CD4-positive, alpha-beta T cell (primary cell): ENCODE measurements at regions of chr14 and their contacts with region 1.

Region 1: GRCh38 chr14:64338616-64339316 is 44.6 kb upstream of the ESR2 start:
- DNase-seq: peak; percentile 58 to 95 (median 80)
- ATAC-seq: peak; percentile 79
- H3K4me3 ChIP-seq: peak overlapping the region; percentile 64
- H3K4me3 Mint-ChIP-seq: peak overlapping the region; percentile 97
- H3K27ac ChIP-seq: peak overlapping the region; percentile 57 to 64
- H3K27ac Mint-ChIP-seq: peak overlapping the region; percentile 84
- H3K4me1 ChIP-seq: peaks cover 13% of the 10 kb centered on the region
- H3K4me1 Mint-ChIP-seq: peaks cover 25% of the 10 kb centered on the region
- H3K27me3 ChIP-seq: no peaks in the 10 kb centered on the region
- H3K27me3 Mint-ChIP-seq: no peaks in the 10 kb centered on the region
- CTCF ChIP-seq: no peak

Region 2: DNA sequence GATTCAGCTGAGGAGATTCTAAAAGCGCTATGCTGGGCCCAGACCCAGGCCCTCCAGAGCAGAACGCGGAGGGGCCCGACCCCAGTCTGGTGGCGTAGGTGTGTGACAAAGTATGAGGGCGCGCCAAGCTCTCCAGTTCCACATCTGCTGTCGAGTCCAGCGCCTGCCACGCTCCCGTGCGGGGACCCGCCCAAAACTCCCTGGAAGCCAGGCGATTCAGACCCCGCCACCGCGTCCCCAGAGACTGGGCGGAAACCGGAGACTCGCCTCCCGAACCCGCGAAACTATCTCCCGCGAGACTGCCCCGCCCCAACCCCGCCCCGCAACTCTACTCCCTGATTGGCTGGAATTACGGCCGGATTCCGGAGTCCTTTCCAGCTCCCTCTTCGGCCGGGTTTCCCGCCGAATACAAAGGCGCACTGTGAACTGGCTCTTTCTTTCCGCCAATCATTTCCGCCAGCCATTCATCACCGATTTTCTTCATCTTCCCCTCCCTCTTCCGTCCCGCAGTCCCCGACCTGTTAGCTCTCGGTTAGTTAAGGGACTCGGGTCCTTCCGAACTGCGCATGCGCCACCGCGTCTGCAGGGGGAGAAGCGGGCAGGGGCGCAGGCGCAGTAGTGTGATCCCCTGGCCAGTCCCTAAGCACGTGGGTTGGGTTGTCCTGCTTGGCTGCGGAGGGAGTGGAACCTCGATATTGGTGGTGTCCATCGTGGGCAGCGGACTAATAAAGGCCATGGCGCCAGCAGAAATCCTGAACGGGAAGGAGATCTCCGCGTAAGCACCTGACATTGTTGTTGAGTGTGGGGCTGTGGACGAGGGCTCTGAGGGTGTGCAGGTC is 49.1 kb after region 1 on chr14 and contains the start of gene MTHFD1:
- CTCF ChIA-PET with region 1: interaction called, 3 read pairs
- POLR2A ChIA-PET with region 1: interaction called, 14 read pairs
- intact Hi-C with region 1: loop called in 1 of 2 experiments (anchors 2 kb)
- DNase-seq: peak; percentile 89 to 99 (median 96)
- ATAC-seq: peak; percentile 88
- H3K4me3 ChIP-seq: peak within 1 kb of the TSS; percentile 83
- H3K4me3 Mint-ChIP-seq: peak within 1 kb of the TSS; percentile 94
- H3K27ac ChIP-seq: peak within 1 kb of the TSS; percentile 43 to 55
- H3K27ac Mint-ChIP-seq: peak within 1 kb of the TSS; percentile 85
- H3K4me1 ChIP-seq: peaks cover 27% of the 10 kb centered on the region
- H3K4me1 Mint-ChIP-seq: peaks cover 33% of the 10 kb centered on the region
- H3K27me3 ChIP-seq: no peaks in the 10 kb centered on the region
- H3K27me3 Mint-ChIP-seq: no peaks in the 10 kb centered on the region
- CTCF ChIP-seq: no peak
- total RNA-seq, gene MTHFD1: 13.3 to 18.9 TPM

Region 3: GRCh38 chr14:64478634-64479250 is 140.0 kb after region 1 on chr14:
- CTCF ChIA-PET with region 1: interaction called, 7 read pairs
- POLR2A ChIA-PET with region 1: interaction called, 3 read pairs
- intact Hi-C with region 1: loop called in 1 of 2 experiments (anchors 2 kb)
- DNase-seq: peak in 4 of 14 experiments; percentile 20 to 63 (median 57)
- ATAC-seq: no peak
- H3K4me3 ChIP-seq: no peak overlapping the region
- H3K4me3 Mint-ChIP-seq: no peak overlapping the region
- H3K27ac ChIP-seq: no peak overlapping the region
- H3K27ac Mint-ChIP-seq: peak overlapping the region; percentile 25
- H3K4me1 ChIP-seq: no peaks in the 10 kb centered on the region
- H3K4me1 Mint-ChIP-seq: peaks cover 27% of the 10 kb centered on the region
- H3K27me3 ChIP-seq: no peaks in the 10 kb centered on the region
- H3K27me3 Mint-ChIP-seq: no peaks in the 10 kb centered on the region
- CTCF ChIP-seq: peak; percentile 75

Region 4: GRCh38 chr14:64636208-64636979 is 297.6 kb after region 1 on chr14:
- CTCF ChIA-PET with region 1: interaction called, 11 read pairs
- POLR2A ChIA-PET with region 1: no interaction called
- intact Hi-C with region 1: no loop called
- DNase-seq: peak; percentile 44 to 83 (median 65)
- ATAC-seq: peak; percentile 95
- H3K4me3 ChIP-seq: no peak overlapping the region
- H3K4me3 Mint-ChIP-seq: no peak overlapping the region
- H3K27ac ChIP-seq: no peak overlapping the region
- H3K27ac Mint-ChIP-seq: no peak overlapping the region
- H3K4me1 ChIP-seq: peaks cover 6% of the 10 kb centered on the region
- H3K4me1 Mint-ChIP-seq: no peaks in the 10 kb centered on the region
- H3K27me3 ChIP-seq: peaks cover 0 to 9% of the 10 kb centered on the region in 2 experiments
- H3K27me3 Mint-ChIP-seq: peaks cover 11% of the 10 kb centered on the region
- CTCF ChIP-seq: peak; percentile 92

Region 5: DNA sequence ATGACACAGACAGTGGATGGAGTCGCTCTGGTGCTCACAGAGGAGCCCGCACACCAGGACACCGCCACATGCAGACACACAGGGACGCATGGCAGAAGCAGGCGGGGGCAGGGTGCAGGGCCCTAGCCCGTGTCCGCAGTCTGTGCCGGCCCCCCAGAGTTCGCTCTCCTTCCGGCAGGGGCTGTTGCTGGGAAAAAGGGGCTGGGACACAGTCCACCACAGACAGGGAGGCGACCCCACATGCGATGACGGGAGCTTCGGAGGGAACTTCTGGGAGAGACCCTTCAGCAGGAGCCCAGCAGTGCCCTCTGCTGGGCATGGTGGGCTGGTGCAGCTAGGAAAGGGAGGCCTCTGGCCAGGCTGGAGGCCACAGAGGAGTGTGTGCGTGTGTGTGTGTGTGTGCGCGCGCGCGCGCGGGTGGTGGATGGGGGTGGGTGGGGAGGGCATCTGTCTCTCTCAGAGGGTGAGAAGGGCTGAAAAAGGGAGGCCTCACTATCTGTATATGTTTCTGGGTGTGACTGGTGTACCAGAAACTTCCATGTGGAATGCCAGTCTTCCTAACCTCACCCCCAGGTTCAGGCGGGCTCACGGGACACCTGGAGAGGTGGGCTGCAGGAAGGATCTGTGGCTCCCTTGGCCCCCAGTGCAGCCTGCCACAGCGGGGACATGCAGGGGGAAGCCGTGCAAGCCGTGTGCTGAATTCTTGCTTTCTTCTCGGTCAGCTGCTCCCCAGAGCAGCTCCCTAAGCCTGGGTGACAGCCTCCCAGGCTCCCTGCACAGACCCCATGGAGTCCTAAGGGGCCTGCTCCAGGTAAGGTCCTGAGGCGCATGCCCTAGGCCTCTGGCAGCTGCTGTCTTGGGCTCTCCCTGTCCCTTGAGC is 426.1 kb after region 1 on chr14:
- CTCF ChIA-PET with region 1: interaction called, 3 read pairs
- POLR2A ChIA-PET with region 1: no interaction called
- intact Hi-C with region 1: loop called in 1 of 2 experiments (anchors 5 kb)
- DNase-seq: peak; percentile 44 to 86 (median 58)
- ATAC-seq: peak; percentile 76
- H3K4me3 ChIP-seq: peak overlapping the region; percentile 33
- H3K4me3 Mint-ChIP-seq: peak overlapping the region; percentile 67
- H3K27ac ChIP-seq: no peak overlapping the region
- H3K27ac Mint-ChIP-seq: no peak overlapping the region
- H3K4me1 ChIP-seq: peaks cover 61% of the 10 kb centered on the region
- H3K4me1 Mint-ChIP-seq: peaks cover 32% of the 10 kb centered on the region
- H3K27me3 ChIP-seq: no peaks in the 10 kb centered on the region
- H3K27me3 Mint-ChIP-seq: no peaks in the 10 kb centered on the region
- CTCF ChIP-seq: peak; percentile 85